ENCODE measurements at regions of chr9 and their contacts with region 1.

Region 1: GRCh38 chr9:33051144-33051543 is 25.3 kb downstream of the SMU1 start:
- DNase-seq: no peak
- H3K4me3 ChIP-seq: no peak overlapping the region
- H3K27ac ChIP-seq: no peak overlapping the region
- H3K4me1 ChIP-seq: no peaks in the 10 kb centered on the region
- H3K27me3 ChIP-seq: no peaks in the 10 kb centered on the region
- CTCF ChIP-seq: no peak
- EP300 ChIP-seq: no peak
- POLR2A ChIP-seq: no peak

Region 2: GRCh38 chr9:33007755-33008154 is 43.4 kb before region 1 on chr9:
- in situ Hi-C with region 1: no loop called
- intact Hi-C with region 1: loop called (anchors 2 kb)
- DNase-seq: no peak
- H3K4me3 ChIP-seq: no peak overlapping the region
- H3K27ac ChIP-seq: no peak overlapping the region
- H3K4me1 ChIP-seq: no peaks in the 10 kb centered on the region
- H3K27me3 ChIP-seq: no peaks in the 10 kb centered on the region
- CTCF ChIP-seq: no peak
- EP300 ChIP-seq: no peak
- POLR2A ChIP-seq: no peak

Measured in transverse colon (tissue), 4 donors.